ENCODE measurements at regions of chr4 and their contacts with region 1.

Region 1: DNA sequence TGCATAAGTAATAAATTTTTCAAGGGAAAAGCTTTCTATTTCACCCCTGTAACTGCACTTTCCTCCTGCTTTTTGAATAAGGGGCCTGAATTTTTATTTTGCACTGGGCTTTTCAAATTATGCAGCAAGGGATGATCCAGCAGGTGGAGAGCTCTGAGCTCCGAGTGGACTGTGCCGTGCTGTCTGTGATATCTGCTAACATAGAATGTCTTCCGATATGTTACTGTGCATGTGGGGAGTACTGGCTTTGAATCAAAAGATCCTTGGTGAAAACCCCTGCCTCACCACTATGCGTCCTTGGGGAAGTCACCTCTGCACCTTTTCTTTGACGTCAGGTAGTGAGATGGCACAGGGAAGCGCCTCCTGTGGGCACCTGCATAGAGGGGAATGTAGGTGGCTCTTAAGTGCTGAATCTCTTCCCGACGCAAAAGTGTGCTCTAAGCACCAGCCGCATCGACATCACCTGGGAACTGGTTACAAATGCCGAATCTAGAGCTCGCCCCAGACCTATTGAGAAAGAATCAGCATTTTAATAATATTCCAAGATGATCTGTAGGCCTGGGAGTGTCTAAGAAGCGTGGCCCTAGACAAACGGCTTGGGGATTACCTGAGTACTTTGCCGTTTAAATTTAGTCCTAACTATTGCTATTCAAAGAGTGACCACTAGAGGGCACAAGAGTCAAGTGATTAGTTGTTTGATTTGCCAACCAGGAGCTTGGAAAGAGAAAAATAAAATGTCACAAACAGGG is 19.2 kb upstream of the WFS1 start:
- DNase-seq: peak in 1 of 2 experiments; percentile 62
- H3K4me3 ChIP-seq: peak overlapping the region; percentile 5 to 50 (median 26); a peak in 6 of 8 replicates
- H3K27ac ChIP-seq: no peak overlapping the region
- H3K4me1 ChIP-seq: peaks cover 0 to 5% (median 4%) of the 10 kb centered on the region in 4 experiments; a peak in 3 of 7 replicates
- H3K27me3 ChIP-seq: no peaks in the 10 kb centered on the region; a peak in 1 of 7 replicates
- CTCF ChIP-seq: peak in 2 of 3 experiments; percentile 69 to 70; a peak in 3 of 4 replicates
- EP300 ChIP-seq: no peak
- POLR2A ChIP-seq: no peak
- RAD21 ChIP-seq: peak; percentile 83 to 86

Region 2: GRCh38 chr4:6019316-6020263 is 230.8 kb before region 1 on chr4:
- CTCF ChIA-PET with region 1: interaction called, 14 read pairs
- POLR2A ChIA-PET with region 1: no interaction called
- DNase-seq: peak in 1 of 2 experiments; percentile 79
- H3K4me3 ChIP-seq: peak overlapping the region in 1 of 4 experiments; percentile 16; a peak in 1 of 8 replicates
- H3K27ac ChIP-seq: no peak overlapping the region
- H3K4me1 ChIP-seq: peaks cover 0 to 8% (median 5%) of the 10 kb centered on the region in 4 experiments; a peak in 6 of 7 replicates
- H3K27me3 ChIP-seq: no peaks in the 10 kb centered on the region
- CTCF ChIP-seq: peak in 2 of 3 experiments; percentile 79 to 87; a peak in 3 of 4 replicates
- EP300 ChIP-seq: no peak
- POLR2A ChIP-seq: no peak
- RAD21 ChIP-seq: peak; percentile 27 to 40; a peak in 3 of 4 replicates

Region 3: DNA sequence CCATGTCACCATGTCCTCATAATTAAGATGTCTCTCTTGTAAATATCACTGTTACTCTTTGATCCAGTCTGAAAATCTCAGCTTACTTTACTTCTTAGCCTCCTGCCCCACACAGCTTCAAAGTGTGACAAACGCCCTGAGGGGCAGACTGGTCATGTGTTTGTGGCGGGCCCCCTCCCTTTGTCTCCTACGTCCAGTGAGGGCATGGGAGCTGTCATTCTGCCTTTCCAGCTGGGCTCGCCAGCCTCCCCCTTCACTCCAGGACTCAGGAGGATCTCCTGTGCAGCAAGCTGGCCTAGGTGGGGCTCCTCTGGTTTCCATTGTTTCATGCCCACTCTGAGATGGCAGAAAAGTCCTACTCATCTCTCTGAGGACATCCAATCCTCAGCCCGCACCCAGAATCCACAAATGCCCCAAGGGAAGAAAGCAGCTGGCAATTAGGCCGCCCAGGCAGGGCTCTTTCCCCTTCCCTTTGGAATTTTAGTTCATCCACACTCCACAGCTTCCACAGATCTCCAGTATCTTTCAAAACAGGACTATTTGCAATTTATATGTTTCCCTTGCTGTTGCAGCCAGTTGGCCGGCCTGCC is 145.8 kb before region 1 on chr4:
- CTCF ChIA-PET with region 1: no interaction called
- POLR2A ChIA-PET with region 1: no interaction called
- DNase-seq: no peak
- H3K4me3 ChIP-seq: peak overlapping the region in 2 of 4 experiments; percentile 7 to 14; a peak in 1 of 8 replicates
- H3K27ac ChIP-seq: no peak overlapping the region
- H3K4me1 ChIP-seq: peaks cover 3 to 14% (median 7%) of the 10 kb centered on the region in 4 experiments; a peak in 6 of 7 replicates
- H3K27me3 ChIP-seq: no peaks in the 10 kb centered on the region; a peak in 1 of 7 replicates
- CTCF ChIP-seq: no peak
- EP300 ChIP-seq: no peak
- POLR2A ChIP-seq: no peak
- RAD21 ChIP-seq: no peak

Region 4: DNA sequence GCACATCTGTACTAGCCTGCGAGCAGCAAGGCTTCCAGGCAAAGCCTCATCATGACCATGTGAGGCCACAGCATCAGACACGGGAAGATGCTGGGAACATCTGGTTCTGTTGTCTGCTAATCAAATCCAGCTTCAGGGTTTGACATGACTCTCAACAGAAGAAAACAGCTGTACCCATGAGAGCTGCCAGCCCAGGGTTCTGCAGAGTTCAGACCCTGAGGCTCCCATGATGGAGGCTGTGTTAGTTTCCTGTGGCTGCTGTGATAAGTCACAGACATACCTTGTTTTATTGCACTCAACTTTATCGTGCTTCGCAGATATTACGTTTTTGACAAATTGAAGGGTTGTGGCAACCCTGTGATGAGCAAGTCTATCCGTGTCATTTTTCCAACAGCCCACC is 87.5 kb before region 1 on chr4:
- CTCF ChIA-PET with region 1: no interaction called
- POLR2A ChIA-PET with region 1: no interaction called
- DNase-seq: no peak
- H3K4me3 ChIP-seq: no peak overlapping the region
- H3K27ac ChIP-seq: no peak overlapping the region
- H3K4me1 ChIP-seq: peaks cover 0 to 2% (median 0%) of the 10 kb centered on the region in 4 experiments; a peak in 1 of 7 replicates
- H3K27me3 ChIP-seq: no peaks in the 10 kb centered on the region
- CTCF ChIP-seq: no peak
- EP300 ChIP-seq: no peak
- POLR2A ChIP-seq: no peak
- RAD21 ChIP-seq: no peak

Region 5: DNA sequence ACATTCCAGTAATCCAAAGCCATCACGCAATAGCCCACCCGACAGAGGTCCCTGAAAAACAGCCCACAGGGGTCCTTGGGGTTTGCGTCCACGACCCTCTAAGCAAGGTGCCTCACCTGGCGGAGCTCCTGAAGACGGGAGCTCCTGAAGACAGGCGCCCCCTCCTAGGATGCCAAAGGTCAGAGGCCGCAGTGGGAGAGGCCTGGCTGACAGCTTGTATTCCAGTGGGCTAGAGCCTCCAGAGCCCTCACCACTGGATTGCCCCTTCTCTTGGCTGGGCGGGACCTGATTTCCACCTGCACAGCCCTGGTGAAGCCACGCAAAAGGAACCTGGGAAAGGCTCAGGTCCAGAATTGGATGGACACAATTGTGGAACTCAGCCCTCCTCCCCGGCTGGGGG is 10.4 kb before region 1 on chr4:
- CTCF ChIA-PET with region 1: interaction called, 25 read pairs
- POLR2A ChIA-PET with region 1: no interaction called
- DNase-seq: no peak
- H3K4me3 ChIP-seq: no peak overlapping the region
- H3K27ac ChIP-seq: no peak overlapping the region
- H3K4me1 ChIP-seq: peaks cover 0 to 4% (median 0%) of the 10 kb centered on the region in 4 experiments; a peak in 3 of 7 replicates
- H3K27me3 ChIP-seq: peaks cover 1 to 15% (median 10%) of the 10 kb centered on the region in 4 experiments; a peak in 6 of 7 replicates
- CTCF ChIP-seq: no peak
- EP300 ChIP-seq: no peak
- POLR2A ChIP-seq: no peak
- RAD21 ChIP-seq: no peak

Region 6: GRCh38 chr4:6269616-6270511 is 19.5 kb after region 1 on chr4 and contains the start of gene WFS1:
- CTCF ChIA-PET with region 1: interaction called, 263 read pairs
- POLR2A ChIA-PET with region 1: interaction called, 6 read pairs
- DNase-seq: peak; percentile 90 to 98
- H3K4me3 ChIP-seq: peak within 1 kb of the TSS; percentile 49 to 94 (median 74)
- H3K27ac ChIP-seq: no peak within 1 kb of the TSS
- H3K4me1 ChIP-seq: peaks cover 4 to 21% (median 9%) of the 10 kb centered on the region in 4 experiments
- H3K27me3 ChIP-seq: peaks cover 0 to 4% (median 0%) of the 10 kb centered on the region in 4 experiments; a peak in 1 of 7 replicates
- CTCF ChIP-seq: no peak
- EP300 ChIP-seq: no peak
- POLR2A ChIP-seq: peak in 1 of 2 experiments; percentile 63; a peak in 2 of 3 replicates
- RAD21 ChIP-seq: no peak
- total RNA-seq, gene WFS1: 29.1 and 34.0 TPM in 2 replicates

Region 7: DNA sequence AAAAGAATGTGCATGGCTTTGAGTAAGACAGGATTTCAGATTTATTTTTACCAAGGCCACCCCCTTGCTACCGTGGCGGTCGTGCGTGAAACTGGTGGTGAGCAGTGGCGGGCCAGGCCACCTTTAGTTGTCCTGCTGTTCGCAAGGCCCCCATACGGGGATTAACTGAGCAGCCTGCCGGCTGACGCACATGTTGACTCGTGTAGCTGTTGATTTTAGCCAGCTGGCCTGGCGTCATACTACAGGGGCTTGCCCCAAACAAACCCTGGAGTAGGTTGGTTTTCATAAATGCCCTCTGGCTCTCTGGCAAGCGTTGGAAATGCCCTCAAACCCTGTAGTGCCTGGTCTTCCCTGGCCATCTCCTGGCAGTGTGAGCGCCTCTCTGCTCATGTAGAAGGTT is 47.6 kb after region 1 on chr4:
- CTCF ChIA-PET with region 1: interaction called, 26 read pairs
- POLR2A ChIA-PET with region 1: no interaction called
- DNase-seq: no peak
- H3K4me3 ChIP-seq: no peak overlapping the region
- H3K27ac ChIP-seq: no peak overlapping the region
- H3K4me1 ChIP-seq: no peaks in the 10 kb centered on the region
- H3K27me3 ChIP-seq: no peaks in the 10 kb centered on the region
- CTCF ChIP-seq: no peak
- EP300 ChIP-seq: no peak
- POLR2A ChIP-seq: no peak
- RAD21 ChIP-seq: no peak

Region 8: DNA sequence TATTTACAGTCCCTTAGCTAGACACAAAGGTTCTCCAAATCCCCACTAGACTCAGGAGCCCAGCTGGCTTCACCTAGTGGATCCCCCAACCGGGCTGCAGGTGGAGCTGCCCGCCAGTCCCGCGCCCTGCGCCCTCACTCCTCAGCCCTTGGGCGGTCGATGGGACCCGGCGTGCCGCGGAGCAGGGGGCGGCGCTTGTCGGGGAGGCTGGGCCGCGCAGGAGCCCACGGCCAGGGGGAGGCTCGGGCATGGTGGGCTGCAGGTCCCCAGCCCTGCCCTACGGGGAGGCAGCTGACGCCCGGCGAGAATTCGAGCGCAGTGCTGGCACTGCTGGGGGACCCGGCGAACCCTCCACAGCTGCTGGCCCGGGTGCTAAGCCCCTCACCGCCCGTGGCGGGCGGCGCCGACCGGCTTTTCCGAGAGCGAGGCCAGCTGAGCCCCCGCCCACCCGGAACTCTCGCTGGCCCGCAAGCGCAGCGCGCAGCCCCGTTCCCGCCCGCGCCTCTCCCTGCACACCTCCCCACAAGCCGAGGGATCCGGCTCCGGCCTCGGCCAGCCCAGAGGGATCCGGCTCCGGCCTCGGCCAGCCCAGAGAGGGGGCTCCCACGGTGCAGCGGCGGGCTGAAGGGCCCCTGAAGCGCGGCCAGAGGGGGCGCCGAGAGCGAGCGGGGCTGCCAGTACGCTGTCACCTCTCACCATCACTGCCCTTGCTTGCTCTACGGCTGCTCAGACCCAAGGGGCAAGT is 58.7 kb after region 1 on chr4:
- CTCF ChIA-PET with region 1: interaction called, 15 read pairs
- POLR2A ChIA-PET with region 1: no interaction called
- DNase-seq: peak in 1 of 2 experiments; percentile 84
- H3K4me3 ChIP-seq: peak overlapping the region in 1 of 4 experiments; percentile 49; a peak in 2 of 8 replicates
- H3K27ac ChIP-seq: no peak overlapping the region
- H3K4me1 ChIP-seq: no peaks in the 10 kb centered on the region
- H3K27me3 ChIP-seq: no peaks in the 10 kb centered on the region; a peak in 1 of 7 replicates
- CTCF ChIP-seq: 0 out of 4 replicates have a peak, but pooled peaks of 1 of the 3 experiments have one; percentile 14
- EP300 ChIP-seq: no peak
- POLR2A ChIP-seq: no peak
- RAD21 ChIP-seq: no peak

Measured in H1 (cell line).